ENCODE measurements at regions of chr14 and their contacts with region 1.

Region 1: GRCh38 chr14:104078031-104078455 is 7.5 kb upstream of the ASPG start:
- DNase-seq: peak; percentile 92
- H3K4me3 ChIP-seq: peak overlapping the region in 1 of 2 experiments; percentile 33; a peak in 1 of 4 replicates
- H3K27ac ChIP-seq: no peak overlapping the region
- H3K4me1 ChIP-seq: peaks cover 0 to 10% of the 10 kb centered on the region in 2 experiments; a peak in 1 of 4 replicates
- H3K27me3 ChIP-seq: no peaks in the 10 kb centered on the region; the same call in 1 of the 2 replicates
- CTCF ChIP-seq: peak; percentile 99
- EP300 ChIP-seq: no peak
- RAD21 ChIP-seq: peak; percentile 98

Region 2: DNA sequence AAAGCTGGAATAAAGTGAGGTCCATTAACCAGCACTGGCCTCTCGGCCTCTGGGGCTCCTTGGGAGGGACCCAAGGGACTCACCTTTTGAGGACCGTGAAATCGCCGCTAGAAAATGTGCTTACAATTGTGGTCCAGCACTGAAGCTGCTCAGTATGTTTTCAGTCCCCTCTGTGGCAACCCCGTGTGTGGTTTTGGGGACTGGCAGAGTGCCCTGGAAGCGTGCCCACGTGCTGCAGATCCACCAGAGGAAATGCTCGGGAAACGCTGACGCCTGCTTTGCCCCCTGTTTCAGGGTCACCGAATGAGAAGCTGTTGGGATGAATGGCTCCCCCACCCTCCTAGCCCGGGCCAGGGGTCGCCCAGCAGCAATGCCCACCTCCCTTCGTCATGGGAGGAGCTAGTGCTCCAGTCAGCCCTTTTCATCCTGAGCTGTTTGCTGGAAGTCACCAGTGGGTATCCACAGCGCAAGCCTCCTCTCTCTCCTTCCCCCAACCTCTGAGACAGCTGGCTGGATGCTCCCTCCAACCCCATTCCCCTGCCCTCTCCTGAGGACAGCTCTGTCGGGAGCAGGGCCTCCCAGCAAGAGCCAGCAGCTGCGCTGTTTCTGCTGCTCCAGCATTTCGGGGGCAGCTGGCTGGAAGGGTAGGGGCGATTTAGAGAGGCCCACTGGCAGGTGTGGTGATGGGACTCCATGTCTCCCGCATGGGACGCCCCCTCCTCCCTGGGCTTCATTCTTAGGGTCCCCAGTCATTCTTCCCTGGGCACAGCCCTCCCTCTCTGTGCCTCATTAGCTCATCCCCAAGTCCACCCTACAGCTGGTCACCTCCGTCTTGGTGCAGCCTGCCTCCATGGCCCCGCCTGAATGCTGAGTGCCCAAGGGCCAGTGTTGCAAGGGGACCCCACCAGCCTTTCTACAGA is 197.4 kb before region 1 on chr14:
- CTCF ChIA-PET with region 1: no interaction called
- POLR2A ChIA-PET with region 1: no interaction called
- DNase-seq: peak; percentile 62
- H3K4me3 ChIP-seq: no peak overlapping the region
- H3K27ac ChIP-seq: peak overlapping the region in 1 of 2 experiments; percentile 24; a peak in 1 of 4 replicates
- H3K4me1 ChIP-seq: peaks cover 0 to 38% of the 10 kb centered on the region in 2 experiments; a peak in 1 of 4 replicates
- H3K27me3 ChIP-seq: no peaks in the 10 kb centered on the region
- CTCF ChIP-seq: no peak
- EP300 ChIP-seq: no peak
- RAD21 ChIP-seq: no peak

Region 3: GRCh38 chr14:104048758-104049507 is 29.1 kb before region 1 on chr14:
- CTCF ChIA-PET with region 1: interaction called, 18 read pairs
- POLR2A ChIA-PET with region 1: no interaction called
- DNase-seq: no peak
- H3K4me3 ChIP-seq: no peak overlapping the region
- H3K27ac ChIP-seq: no peak overlapping the region
- H3K4me1 ChIP-seq: peaks cover 0 to 12% of the 10 kb centered on the region in 2 experiments; a peak in 1 of 4 replicates
- H3K27me3 ChIP-seq: no peaks in the 10 kb centered on the region
- CTCF ChIP-seq: no peak
- EP300 ChIP-seq: no peak
- RAD21 ChIP-seq: no peak

Region 4: GRCh38 chr14:104108216-104108569 is 30.1 kb after region 1 on chr14:
- CTCF ChIA-PET with region 1: interaction called, 16 read pairs
- POLR2A ChIA-PET with region 1: no interaction called
- DNase-seq: peak; percentile 54
- H3K4me3 ChIP-seq: no peak overlapping the region
- H3K27ac ChIP-seq: no peak overlapping the region
- H3K4me1 ChIP-seq: peaks cover 0 to 21% of the 10 kb centered on the region in 2 experiments; a peak in 1 of 4 replicates
- H3K27me3 ChIP-seq: no peaks in the 10 kb centered on the region
- CTCF ChIP-seq: no peak
- EP300 ChIP-seq: no peak
- RAD21 ChIP-seq: no peak

Region 5: DNA sequence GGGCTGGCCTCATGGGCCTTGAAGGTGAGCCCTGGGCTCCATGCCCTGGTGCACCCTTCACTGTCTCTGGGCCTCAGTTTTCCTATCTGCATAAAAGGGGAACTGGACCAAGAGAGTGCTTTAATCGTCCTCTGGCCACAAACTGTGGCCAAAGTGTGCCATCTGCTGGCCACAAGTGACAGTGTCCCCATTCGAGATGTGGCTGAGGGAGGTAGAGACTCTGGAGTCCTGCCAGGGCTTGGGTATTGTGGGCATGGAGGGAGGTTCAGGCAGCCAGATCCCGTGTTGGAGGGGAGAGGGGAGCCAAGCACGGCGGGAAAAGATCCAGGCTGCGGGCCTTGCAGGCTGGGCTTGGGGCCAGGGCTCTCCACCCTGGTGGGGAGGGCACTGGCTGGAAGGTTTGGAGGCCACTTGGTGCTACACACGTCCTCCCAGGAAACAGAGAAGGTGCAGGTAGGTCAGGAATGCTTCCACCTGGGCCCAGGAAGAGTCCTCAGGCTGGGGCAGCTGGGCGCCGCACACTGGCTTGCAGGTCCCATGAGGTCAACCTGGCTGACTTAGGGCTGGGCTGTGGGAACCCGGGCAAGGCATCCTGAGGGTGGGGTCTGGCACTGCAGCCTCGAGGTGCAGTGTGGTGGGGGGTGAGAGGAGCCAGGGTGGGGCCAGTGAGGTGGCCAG is 53.1 kb after region 1 on chr14:
- CTCF ChIA-PET with region 1: interaction called, 166 read pairs
- POLR2A ChIA-PET with region 1: interaction called, 3 read pairs
- DNase-seq: peak; percentile 87
- H3K4me3 ChIP-seq: peak overlapping the region in 1 of 2 experiments; percentile 44; a peak in 1 of 4 replicates
- H3K27ac ChIP-seq: no peak overlapping the region
- H3K4me1 ChIP-seq: peaks cover 0 to 19% of the 10 kb centered on the region in 2 experiments; a peak in 1 of 4 replicates
- H3K27me3 ChIP-seq: peaks cover 9% of the 10 kb centered on the region
- CTCF ChIP-seq: peak; percentile 51
- EP300 ChIP-seq: no peak
- RAD21 ChIP-seq: peak; percentile 97

Region 6: GRCh38 chr14:104633276-104634137 is 555.5 kb after region 1 on chr14:
- CTCF ChIA-PET with region 1: interaction called, 15 read pairs
- POLR2A ChIA-PET with region 1: no interaction called
- DNase-seq: peak; percentile 51
- H3K4me3 ChIP-seq: no peak overlapping the region
- H3K27ac ChIP-seq: peak overlapping the region in 1 of 2 experiments; percentile 14; a peak in 1 of 4 replicates
- H3K4me1 ChIP-seq: peaks cover 0 to 8% of the 10 kb centered on the region in 2 experiments; a peak in 2 of 4 replicates
- H3K27me3 ChIP-seq: no peaks in the 10 kb centered on the region
- CTCF ChIP-seq: no peak
- EP300 ChIP-seq: no peak
- RAD21 ChIP-seq: no peak; the same call in 1 of the 2 replicates

Measured in SK-N-SH (cell line).